BJ (cell line): ENCODE measurements at regions of chr9 and their contacts with region 1.

Region 1: GRCh38 chr9:115109486-115109885 is 8.5 kb downstream of the TNC start:
- DNase-seq: no peak
- H3K4me3 ChIP-seq: no peak overlapping the region
- H3K27me3 ChIP-seq: no peaks in the 10 kb centered on the region
- CTCF ChIP-seq: no peak

Region 2: DNA sequence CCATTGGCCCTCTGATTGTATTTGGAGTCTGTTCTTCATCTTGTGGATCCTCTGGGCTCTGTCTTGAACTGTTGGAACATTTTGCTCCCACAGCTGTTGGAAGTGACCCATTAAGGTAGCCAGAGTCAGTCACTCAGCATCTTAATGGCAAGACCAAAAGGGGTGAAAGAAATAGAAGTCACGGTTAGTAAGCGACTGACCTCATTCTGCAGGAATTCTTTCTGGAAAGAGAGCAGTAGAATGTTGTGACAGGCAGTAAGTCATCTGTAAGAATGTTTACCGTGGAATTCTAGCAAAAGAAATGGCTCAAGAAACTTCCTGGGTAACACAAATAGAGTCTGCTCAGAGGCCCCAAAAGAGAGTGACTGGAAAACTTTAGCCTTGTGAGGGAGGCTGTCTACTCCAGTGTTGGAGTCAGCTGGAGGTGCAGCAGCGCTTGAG is 37.1 kb after region 1 on chr9:
- CTCF ChIA-PET with region 1: no interaction called
- POLR2A ChIA-PET with region 1: no interaction called
- DNase-seq: peak; percentile 90
- H3K4me3 ChIP-seq: no peak overlapping the region
- H3K27me3 ChIP-seq: no peaks in the 10 kb centered on the region
- CTCF ChIP-seq: no peak

Region 3: DNA sequence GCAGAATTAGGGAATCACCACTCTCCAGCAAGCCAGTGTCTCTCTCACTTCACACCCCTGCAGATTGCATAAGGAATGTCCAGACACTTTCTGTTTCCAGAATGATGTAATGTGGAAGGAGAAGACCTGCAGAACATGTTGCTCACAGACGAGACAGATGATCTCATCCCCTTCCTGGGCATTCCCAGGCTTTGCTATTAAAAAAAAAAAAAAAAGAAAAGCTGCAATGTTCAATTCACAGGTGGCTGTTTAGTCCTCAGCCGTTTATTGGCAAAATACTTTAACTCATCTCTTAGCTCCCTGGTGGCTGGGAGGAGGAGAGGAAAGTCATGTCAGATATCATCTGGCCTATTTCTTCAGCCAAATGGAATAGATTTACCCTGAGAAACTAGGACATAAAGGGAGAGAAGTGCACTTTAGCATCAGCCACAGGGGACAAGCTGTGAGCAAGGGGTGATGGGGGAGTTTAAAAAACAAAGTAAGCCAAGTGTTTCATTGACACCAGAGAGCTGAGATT is 104.4 kb after region 1 on chr9:
- CTCF ChIA-PET with region 1: no interaction called
- POLR2A ChIA-PET with region 1: interaction called, 10 read pairs
- DNase-seq: peak; percentile 73
- H3K4me3 ChIP-seq: no peak overlapping the region
- H3K27me3 ChIP-seq: no peaks in the 10 kb centered on the region
- CTCF ChIP-seq: no peak